ENCODE measurements at regions of chr10 and their contacts with region 1.

Region 1: GRCh38 chr10:68135922-68136718 is 26.8 kb downstream of the MYPN start:
- DNase-seq: peak; percentile 83
- H3K4me3 Mint-ChIP-seq: peak overlapping the region; percentile 2
- H3K27ac Mint-ChIP-seq: peak overlapping the region; percentile 54
- H3K4me1 Mint-ChIP-seq: peaks cover 12% of the 10 kb centered on the region
- H3K27me3 Mint-ChIP-seq: no peaks in the 10 kb centered on the region
- CTCF ChIP-seq: no peak

Region 2: DNA sequence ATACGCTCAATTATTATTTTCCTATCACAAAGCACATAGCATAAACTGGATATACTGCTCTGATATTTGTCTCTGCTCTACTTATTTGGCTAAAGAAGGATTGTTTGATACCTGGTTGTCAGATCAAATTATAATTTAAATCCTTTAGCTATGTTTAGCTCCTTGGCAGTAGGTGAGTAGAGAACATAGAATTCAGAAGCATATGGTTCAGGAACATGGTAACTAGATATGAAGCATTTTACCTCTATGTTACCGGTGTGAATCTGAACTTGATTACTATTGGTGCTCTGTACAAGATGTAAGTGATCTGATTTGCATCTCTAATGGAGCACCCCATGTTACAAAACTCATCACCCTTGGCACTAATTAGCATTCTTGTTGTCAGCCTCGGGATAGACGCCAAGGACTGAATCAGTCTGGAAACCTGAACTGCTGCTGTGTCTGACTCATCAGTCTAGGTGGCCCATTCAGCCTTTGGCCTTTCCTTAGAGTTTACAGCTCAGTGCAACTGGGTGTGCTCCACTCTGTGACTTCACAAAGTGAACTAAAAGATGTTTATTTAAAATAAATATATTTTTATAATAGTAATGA is 39.1 kb before region 1 on chr10:
- CTCF ChIA-PET with region 1: interaction called, 4 read pairs
- POLR2A ChIA-PET with region 1: interaction called, 7 read pairs
- intact Hi-C with region 1: loop called (anchors 1 kb)
- DNase-seq: peak; percentile 97
- H3K4me3 Mint-ChIP-seq: no peak overlapping the region
- H3K27ac Mint-ChIP-seq: no peak overlapping the region
- H3K4me1 Mint-ChIP-seq: peaks cover 21% of the 10 kb centered on the region
- H3K27me3 Mint-ChIP-seq: no peaks in the 10 kb centered on the region
- CTCF ChIP-seq: no peak

Region 3: GRCh38 chr10:68271196-68271882 is 135.2 kb after region 1 on chr10:
- CTCF ChIA-PET with region 1: no interaction called
- POLR2A ChIA-PET with region 1: no interaction called
- intact Hi-C with region 1: no loop called
- DNase-seq: no peak
- H3K4me3 Mint-ChIP-seq: no peak overlapping the region
- H3K27ac Mint-ChIP-seq: no peak overlapping the region
- H3K4me1 Mint-ChIP-seq: no peaks in the 10 kb centered on the region
- H3K27me3 Mint-ChIP-seq: no peaks in the 10 kb centered on the region
- CTCF ChIP-seq: no peak

Measured in MCF 10A (cell line).